ENCODE measurements at regions of chr18 and their contacts with region 1.

Region 1: GRCh38 chr18:59996370-59996966 is 96.7 kb downstream of the PMAIP1 start:
- DNase-seq: peak; percentile 57
- ATAC-seq: peak; percentile 76
- H3K4me3 ChIP-seq: no peak overlapping the region
- H3K27ac ChIP-seq: no peak overlapping the region
- H3K4me1 ChIP-seq: no peaks in the 10 kb centered on the region
- H3K27me3 ChIP-seq: peaks cover 16% of the 10 kb centered on the region
- CTCF ChIP-seq: peak; percentile 73
- POLR2A ChIP-seq: no peak
- RAD21 ChIP-seq: peak; percentile 76

Region 2: GRCh38 chr18:60176259-60176658 is 179.8 kb after region 1 on chr18:
- CTCF ChIA-PET with region 1: no interaction called
- POLR2A ChIA-PET with region 1: no interaction called
- dilution Hi-C with region 1: no loop called
- in situ Hi-C with region 1: no loop called
- intact Hi-C with region 1: loop called (anchors 10 kb)
- DNase-seq: no peak
- ATAC-seq: no peak
- H3K4me3 ChIP-seq: no peak overlapping the region
- H3K27ac ChIP-seq: no peak overlapping the region
- H3K4me1 ChIP-seq: no peaks in the 10 kb centered on the region
- H3K27me3 ChIP-seq: no peaks in the 10 kb centered on the region
- CTCF ChIP-seq: no peak
- POLR2A ChIP-seq: no peak
- RAD21 ChIP-seq: no peak

Region 3: GRCh38 chr18:60232541-60232940 is 236.1 kb after region 1 on chr18:
- CTCF ChIA-PET with region 1: no interaction called
- POLR2A ChIA-PET with region 1: no interaction called
- dilution Hi-C with region 1: no loop called
- in situ Hi-C with region 1: no loop called
- intact Hi-C with region 1: loop called (anchors 10 kb)
- DNase-seq: peak; percentile 73
- ATAC-seq: peak; percentile 40; the same call in 1 of the 2 replicates
- H3K4me3 ChIP-seq: no peak overlapping the region
- H3K27ac ChIP-seq: no peak overlapping the region
- H3K4me1 ChIP-seq: no peaks in the 10 kb centered on the region
- H3K27me3 ChIP-seq: no peaks in the 10 kb centered on the region
- CTCF ChIP-seq: no peak
- POLR2A ChIP-seq: no peak
- RAD21 ChIP-seq: no peak

Region 4: DNA sequence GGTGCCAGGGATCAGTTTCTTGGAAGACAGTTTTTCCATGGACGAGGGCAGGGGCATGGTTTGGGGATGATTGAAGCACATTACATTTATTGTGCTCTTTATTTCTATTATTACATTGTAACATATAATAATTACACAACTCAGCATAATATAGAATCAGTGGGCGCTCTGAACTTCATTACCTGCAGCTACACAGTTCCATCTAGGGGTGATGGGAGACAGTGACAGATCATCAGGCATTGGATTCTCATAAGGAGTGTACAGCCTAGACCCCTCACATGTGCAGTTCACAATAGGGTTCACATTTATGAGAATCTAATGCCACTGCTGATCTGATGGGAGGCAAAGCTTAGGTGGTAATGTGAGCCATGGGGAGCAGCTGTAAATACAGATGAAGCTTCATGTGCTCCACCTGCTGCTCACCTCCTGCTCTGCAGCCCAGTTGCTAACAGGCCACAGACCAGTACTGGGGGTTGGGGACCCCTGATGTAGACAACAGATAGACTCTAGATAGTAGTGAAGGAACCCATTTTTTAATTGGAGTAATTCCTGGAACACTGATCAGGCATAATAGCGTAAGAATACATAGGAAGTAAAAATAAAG is 417.6 kb after region 1 on chr18:
- CTCF ChIA-PET with region 1: interaction called, 15 read pairs
- POLR2A ChIA-PET with region 1: no interaction called
- dilution Hi-C with region 1: no loop called
- in situ Hi-C with region 1: loop called (anchors 5 kb)
- intact Hi-C with region 1: loop called (anchors 1 kb)
- DNase-seq: peak; percentile 7
- ATAC-seq: 0 out of 2 replicates have a peak, but pooled peaks have one; percentile 54
- H3K4me3 ChIP-seq: no peak overlapping the region
- H3K27ac ChIP-seq: no peak overlapping the region
- H3K4me1 ChIP-seq: no peaks in the 10 kb centered on the region
- H3K27me3 ChIP-seq: no peaks in the 10 kb centered on the region
- CTCF ChIP-seq: peak; percentile 45
- POLR2A ChIP-seq: no peak
- RAD21 ChIP-seq: peak; percentile 43; the same call in 1 of the 2 replicates

Region 5: GRCh38 chr18:60485201-60485600 is 488.7 kb after region 1 on chr18:
- CTCF ChIA-PET with region 1: no interaction called
- POLR2A ChIA-PET with region 1: no interaction called
- dilution Hi-C with region 1: no loop called
- in situ Hi-C with region 1: no loop called
- intact Hi-C with region 1: loop called (anchors 5 kb)
- DNase-seq: peak; percentile 3
- ATAC-seq: no peak
- H3K4me3 ChIP-seq: no peak overlapping the region
- H3K27ac ChIP-seq: no peak overlapping the region
- H3K4me1 ChIP-seq: no peaks in the 10 kb centered on the region
- H3K27me3 ChIP-seq: no peaks in the 10 kb centered on the region
- CTCF ChIP-seq: no peak
- POLR2A ChIP-seq: no peak
- RAD21 ChIP-seq: no peak

Region 6: GRCh38 chr18:60549338-60549960 is 553.0 kb after region 1 on chr18:
- CTCF ChIA-PET with region 1: interaction called, 19 read pairs
- POLR2A ChIA-PET with region 1: no interaction called
- dilution Hi-C with region 1: loop called (anchors 25 kb)
- in situ Hi-C with region 1: loop called (anchors 5 kb)
- intact Hi-C with region 1: loop called (anchors 1 kb)
- DNase-seq: peak; percentile 78
- ATAC-seq: peak; percentile 66
- H3K4me3 ChIP-seq: no peak overlapping the region
- H3K27ac ChIP-seq: no peak overlapping the region
- H3K4me1 ChIP-seq: no peaks in the 10 kb centered on the region
- H3K27me3 ChIP-seq: no peaks in the 10 kb centered on the region
- CTCF ChIP-seq: peak; percentile 90
- POLR2A ChIP-seq: no peak
- RAD21 ChIP-seq: peak; percentile 88

Region 7: GRCh38 chr18:60554967-60555366 is 558.5 kb after region 1 on chr18:
- CTCF ChIA-PET with region 1: interaction called, 19 read pairs
- POLR2A ChIA-PET with region 1: no interaction called
- dilution Hi-C with region 1: loop called (anchors 25 kb)
- in situ Hi-C with region 1: loop called (anchors 5 kb)
- intact Hi-C with region 1: no loop called
- DNase-seq: no peak
- ATAC-seq: no peak
- H3K4me3 ChIP-seq: no peak overlapping the region
- H3K27ac ChIP-seq: no peak overlapping the region
- H3K4me1 ChIP-seq: no peaks in the 10 kb centered on the region
- H3K27me3 ChIP-seq: no peaks in the 10 kb centered on the region
- CTCF ChIP-seq: no peak
- POLR2A ChIP-seq: no peak
- RAD21 ChIP-seq: no peak

Measured in IMR-90 (cell line).